Right ventricle myocardium inferior (tissue), 1 donor: ENCODE measurements at regions of chr18 and their contacts with region 1.

Region 1: DNA sequence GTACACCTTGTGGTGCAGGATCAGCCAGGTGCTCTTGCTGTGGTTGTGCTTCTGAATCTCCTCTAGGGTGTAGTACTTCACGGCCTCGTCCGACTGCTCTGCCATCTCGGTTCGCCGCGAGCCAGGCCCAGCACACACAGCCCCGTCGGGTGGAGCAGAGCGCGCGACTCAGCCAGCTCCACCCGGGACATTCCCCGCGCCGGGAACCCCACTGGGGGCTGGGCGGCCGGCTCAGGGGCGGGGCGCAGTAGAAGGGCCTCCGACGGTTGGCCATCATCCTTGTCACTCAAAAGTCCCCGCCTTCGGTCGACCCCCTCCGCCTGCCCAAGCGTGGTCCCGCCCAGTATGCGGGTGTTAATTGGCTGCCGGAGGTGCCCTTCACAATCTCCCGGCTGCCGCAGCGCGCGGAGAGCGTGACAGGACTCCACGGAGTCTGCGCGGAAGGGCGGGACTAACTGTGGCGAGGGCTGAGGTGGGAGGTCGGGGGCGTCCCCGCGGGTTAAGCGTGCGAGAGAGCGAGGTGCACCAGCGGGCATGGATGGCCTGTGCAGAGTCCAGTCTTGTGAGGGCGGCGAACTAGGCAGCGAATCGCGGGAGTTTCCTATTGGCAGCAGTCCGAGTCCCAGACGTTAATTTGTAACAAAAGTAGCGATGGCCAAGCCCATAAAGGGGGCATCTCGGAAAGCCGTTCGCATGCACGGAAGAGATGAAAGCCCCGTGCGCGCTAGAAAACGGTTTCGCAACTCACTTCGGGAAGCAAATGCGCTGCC is at the start of gene CYB5A:
- DNase-seq: peak; percentile 98
- ATAC-seq: peak; percentile 99
- total RNA-seq, gene CYB5A: 101 TPM

Region 2: DNA sequence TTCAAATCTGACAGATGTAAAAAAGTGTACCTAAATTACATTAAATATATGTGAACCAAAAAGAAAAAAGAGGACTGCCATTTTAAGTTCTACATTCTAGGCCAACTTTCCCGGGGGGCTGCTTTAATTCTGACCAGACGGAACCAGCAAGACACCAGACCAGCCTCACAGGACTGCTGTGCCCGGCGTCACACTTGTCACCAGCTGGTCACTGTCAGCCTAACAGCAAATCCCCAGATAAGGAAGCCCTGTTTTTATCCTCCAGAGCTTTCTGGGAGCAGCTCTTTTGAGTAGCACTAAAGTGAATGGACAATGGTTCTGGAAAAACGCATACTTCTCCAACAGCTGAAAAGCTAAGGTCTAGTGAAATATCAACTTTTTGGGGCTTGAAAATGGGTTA is 35.8 kb before region 1 on chr18:
- intact Hi-C with region 1: loop called (anchors 2 kb)
- DNase-seq: no peak
- ATAC-seq: peak; percentile 81